Prostate gland (tissue), 2 donors: ENCODE measurements at regions of chr16 and their contacts with region 1.

Region 1: GRCh38 chr16:27109666-27110523 is 43.2 kb downstream of the C16orf82 start:
- DNase-seq: peak; percentile 22
- H3K4me3 ChIP-seq: peak overlapping the region; percentile 20 to 22
- H3K27ac ChIP-seq: no peak overlapping the region
- H3K4me1 ChIP-seq: no peaks in the 10 kb centered on the region
- H3K27me3 ChIP-seq: no peaks in the 10 kb centered on the region
- CTCF ChIP-seq: peak; percentile 68 to 94 (median 77)
- POLR2A ChIP-seq: no peak

Region 2: DNA sequence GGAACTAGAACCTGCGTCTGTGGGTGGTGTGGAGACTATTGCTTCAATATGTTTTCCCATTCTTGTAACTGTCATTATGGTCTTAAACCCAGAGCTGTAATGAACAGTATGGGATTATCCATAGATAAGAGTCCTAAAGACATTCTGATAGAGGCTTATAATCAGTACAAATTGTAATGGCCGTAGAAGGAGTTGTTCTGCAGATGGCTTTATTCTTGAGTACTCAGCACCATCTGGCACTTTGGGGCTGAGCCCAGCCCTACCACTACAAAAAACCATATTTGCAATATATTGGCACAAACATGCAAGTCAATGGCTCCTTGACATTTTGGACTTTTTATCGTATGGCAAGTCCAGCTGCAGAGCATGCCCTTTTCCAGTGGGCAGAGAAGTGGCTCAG is 1268.1 kb before region 1 on chr16:
- intact Hi-C with region 1: loop called (anchors 5 kb)
- DNase-seq: no peak
- H3K4me3 ChIP-seq: no peak overlapping the region
- H3K27ac ChIP-seq: no peak overlapping the region
- H3K4me1 ChIP-seq: no peaks in the 10 kb centered on the region
- H3K27me3 ChIP-seq: no peaks in the 10 kb centered on the region
- CTCF ChIP-seq: no peak
- POLR2A ChIP-seq: no peak

Region 3: DNA sequence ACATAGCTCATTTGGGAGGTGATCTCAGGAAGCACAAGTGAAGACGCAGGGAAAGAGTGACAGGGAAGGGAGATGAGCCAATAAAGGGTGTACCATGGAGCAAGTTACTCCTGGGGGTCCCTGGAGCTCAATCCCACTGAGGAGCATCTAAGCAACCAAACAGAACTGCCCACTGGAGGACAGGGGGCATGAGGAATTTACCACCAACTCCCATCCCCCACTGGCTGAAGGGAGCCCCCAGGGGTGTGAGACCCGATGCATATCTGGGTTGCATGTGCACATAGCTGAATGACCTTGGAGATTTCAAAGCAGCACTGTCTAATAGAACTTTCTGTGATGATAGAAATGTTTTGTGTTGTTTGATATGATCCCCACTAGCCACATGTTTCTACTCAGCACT is 13.5 kb before region 1 on chr16:
- intact Hi-C with region 1: no loop called
- DNase-seq: no peak
- H3K4me3 ChIP-seq: no peak overlapping the region
- H3K27ac ChIP-seq: no peak overlapping the region
- H3K4me1 ChIP-seq: no peaks in the 10 kb centered on the region
- H3K27me3 ChIP-seq: no peaks in the 10 kb centered on the region
- CTCF ChIP-seq: no peak
- POLR2A ChIP-seq: no peak

Region 4: DNA sequence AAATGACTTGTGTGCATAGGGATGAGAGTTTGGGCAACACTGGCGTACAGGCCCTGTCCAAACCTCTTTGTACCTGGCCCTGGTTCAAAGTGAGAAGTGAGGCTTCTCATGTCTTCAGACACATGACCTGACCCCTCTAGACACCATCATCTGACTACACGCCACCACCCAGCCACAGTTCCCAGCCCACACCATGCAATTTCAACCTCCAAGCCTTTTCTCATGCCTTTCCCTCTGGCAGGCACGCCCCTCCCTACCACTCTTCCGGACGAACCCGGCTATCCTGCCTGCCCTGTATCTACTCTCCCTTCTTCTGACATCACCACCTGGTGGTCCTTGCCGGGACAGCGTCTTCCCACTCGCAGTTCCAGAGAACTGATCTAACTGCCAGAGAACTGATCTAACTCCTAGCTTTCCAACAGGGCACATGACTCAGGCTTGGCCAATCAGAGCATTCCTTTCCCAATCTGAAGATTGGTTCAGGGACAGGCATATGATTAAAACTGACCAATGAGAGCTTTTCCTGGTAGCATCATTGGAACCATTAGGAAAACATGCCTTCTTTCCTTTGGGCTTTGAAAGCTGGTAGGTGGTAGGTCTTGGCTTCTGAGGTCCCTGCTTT is 265.0 kb after region 1 on chr16:
- intact Hi-C with region 1: no loop called
- DNase-seq: peak; percentile 31
- H3K4me3 ChIP-seq: no peak overlapping the region
- H3K27ac ChIP-seq: no peak overlapping the region
- H3K4me1 ChIP-seq: no peaks in the 10 kb centered on the region
- H3K27me3 ChIP-seq: no peaks in the 10 kb centered on the region
- CTCF ChIP-seq: peak in 2 of 4 experiments; percentile 43 to 55
- POLR2A ChIP-seq: no peak